HepG2 (cell line): ENCODE measurements at regions of chr6 and their contacts with region 1.

Region 1: DNA sequence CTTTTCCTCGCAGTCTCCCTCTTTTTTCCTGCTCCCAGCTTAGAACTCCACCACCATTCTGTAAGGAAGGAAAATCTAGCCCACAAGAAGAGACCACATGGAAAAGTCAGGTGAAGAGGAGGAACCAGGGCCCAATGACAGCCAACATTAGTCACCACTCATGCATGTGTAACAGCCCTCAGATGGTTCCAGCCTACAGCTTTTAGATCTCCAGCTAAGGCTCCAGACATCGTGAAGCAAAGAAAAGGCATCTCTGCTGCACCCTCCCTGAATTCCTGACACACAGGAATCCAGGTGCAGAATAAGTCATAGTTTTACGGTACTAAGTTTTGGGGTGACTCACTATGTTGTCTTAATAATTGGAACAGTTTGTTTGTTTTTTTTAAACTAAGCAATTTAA is 25.6 kb downstream of the DCDC2 start:
- DNase-seq: peak; percentile 54
- ATAC-seq: no peak
- H3K4me3 ChIP-seq: no peak overlapping the region
- H3K27ac ChIP-seq: peak overlapping the region; percentile 10
- H3K4me1 ChIP-seq: peaks cover 75% of the 10 kb centered on the region
- H3K27me3 ChIP-seq: no peaks in the 10 kb centered on the region
- CTCF ChIP-seq: no peak
- EP300 ChIP-seq: no peak
- POLR2A ChIP-seq: no peak
- RAD21 ChIP-seq: no peak

Region 2: GRCh38 chr6:24147511-24148149 is 184.7 kb before region 1 on chr6:
- CTCF ChIA-PET with region 1: no interaction called
- POLR2A ChIA-PET with region 1: no interaction called
- in situ Hi-C with region 1: no loop called
- intact Hi-C with region 1: loop called (anchors 5 kb)
- DNase-seq: no peak
- ATAC-seq: no peak
- H3K4me3 ChIP-seq: peak overlapping the region in 1 of 3 experiments; percentile 15; a peak in 1 of 6 replicates
- H3K27ac ChIP-seq: peak overlapping the region; percentile 84
- H3K4me1 ChIP-seq: peaks cover 55% of the 10 kb centered on the region
- H3K27me3 ChIP-seq: no peaks in the 10 kb centered on the region
- CTCF ChIP-seq: no peak
- EP300 ChIP-seq: no peak
- POLR2A ChIP-seq: no peak; a peak in 1 of 4 replicates
- RAD21 ChIP-seq: no peak

Region 3: DNA sequence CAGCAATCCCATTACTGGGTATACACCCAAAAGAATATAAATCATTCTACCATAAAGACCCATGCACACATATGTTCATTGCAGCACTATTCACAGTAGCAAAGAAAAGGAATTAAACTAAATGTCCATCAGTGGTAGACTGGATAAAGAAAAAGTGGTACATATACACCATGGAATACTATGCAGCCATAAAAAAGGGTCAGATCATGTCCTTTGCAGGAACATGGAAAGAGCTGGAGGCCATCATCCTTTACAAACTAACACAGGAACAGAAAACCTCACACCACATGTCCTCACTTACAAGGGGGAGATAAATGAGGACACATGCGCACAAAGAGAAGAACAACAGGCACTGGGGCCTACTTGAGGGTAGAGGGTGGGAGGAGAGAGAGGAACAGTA is 35.4 kb before region 1 on chr6:
- CTCF ChIA-PET with region 1: no interaction called
- POLR2A ChIA-PET with region 1: no interaction called
- in situ Hi-C with region 1: no loop called
- intact Hi-C with region 1: no loop called
- DNase-seq: no peak
- ATAC-seq: no peak
- H3K4me3 ChIP-seq: no peak overlapping the region
- H3K27ac ChIP-seq: no peak overlapping the region
- H3K4me1 ChIP-seq: no peaks in the 10 kb centered on the region
- H3K27me3 ChIP-seq: no peaks in the 10 kb centered on the region
- CTCF ChIP-seq: no peak
- EP300 ChIP-seq: no peak
- POLR2A ChIP-seq: no peak
- RAD21 ChIP-seq: no peak

Region 4: DNA sequence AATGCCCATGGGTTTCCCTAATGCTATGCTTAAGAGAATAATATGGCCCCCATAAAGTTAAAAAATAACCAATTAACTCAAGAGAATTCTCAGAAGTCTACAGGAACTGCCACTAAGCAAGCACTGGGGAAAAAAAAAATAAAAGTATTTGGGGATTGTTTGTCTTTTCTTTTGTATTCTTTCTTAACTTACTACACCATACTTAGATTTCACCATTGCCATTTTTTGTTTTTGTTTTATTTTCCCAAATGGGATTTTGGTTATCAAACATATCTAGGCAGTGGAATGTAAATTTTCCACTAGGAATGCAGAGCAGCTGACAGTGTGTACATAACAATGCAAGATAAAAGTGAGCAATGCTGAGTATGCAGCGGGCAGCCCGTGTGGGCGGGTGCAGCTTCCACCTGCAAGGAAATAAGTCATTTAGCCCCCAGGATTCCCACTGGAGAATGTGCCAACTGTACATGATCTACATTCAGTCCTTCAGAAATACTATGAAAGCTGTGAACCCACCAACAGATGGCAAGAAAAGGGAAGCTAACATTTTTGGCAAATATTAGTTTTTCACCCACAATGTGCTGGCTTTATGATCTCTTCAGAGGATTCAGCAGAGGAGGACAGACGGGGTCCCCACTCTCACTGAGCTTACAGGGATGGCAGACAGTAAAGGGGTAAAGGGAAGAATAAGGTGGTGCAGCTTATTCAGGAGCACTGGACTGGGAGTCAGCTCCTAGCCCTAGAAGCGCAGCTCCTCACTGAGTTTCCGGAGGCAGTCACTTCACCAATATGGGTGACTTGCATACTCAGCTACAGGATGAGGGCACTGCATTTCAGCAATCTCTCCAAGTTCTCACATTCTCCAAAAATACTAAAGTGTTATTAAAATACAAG is 18.8 kb before region 1 on chr6:
- CTCF ChIA-PET with region 1: no interaction called
- POLR2A ChIA-PET with region 1: interaction called, 4 read pairs
- in situ Hi-C with region 1: no loop called
- intact Hi-C with region 1: loop called (anchors 2 kb)
- DNase-seq: peak; percentile 93
- ATAC-seq: peak; percentile 99
- H3K4me3 ChIP-seq: peak overlapping the region in 1 of 3 experiments; percentile 13; a peak in 1 of 6 replicates
- H3K27ac ChIP-seq: peak overlapping the region; percentile 73
- H3K4me1 ChIP-seq: peaks cover 61% of the 10 kb centered on the region
- H3K27me3 ChIP-seq: no peaks in the 10 kb centered on the region
- CTCF ChIP-seq: 0 out of 2 replicates have a peak, but pooled peaks have one; percentile 12
- EP300 ChIP-seq: peak in 1 of 2 experiments; percentile 93; a peak in 2 of 4 replicates
- POLR2A ChIP-seq: no peak
- RAD21 ChIP-seq: peak; percentile 33; the same call in 1 of the 2 replicates